Activated CD4-positive, alpha-beta T cell treated with anti-CD3 and anti-CD28 coated beads, Interleukin-2, amount 10 ng/mL, durations not matched to agents 24 days and 14 days (primary cell): ENCODE measurements at regions of chr9 and their contacts with region 1.

Region 1: GRCh38 chr9:3746296-3747275 is 220.8 kb upstream of the RFX3 start:
- DNase-seq: no peak
- H3K4me3 Mint-ChIP-seq: no peak overlapping the region
- H3K27ac Mint-ChIP-seq: peak overlapping the region; percentile 54
- H3K4me1 Mint-ChIP-seq: peaks cover 15% of the 10 kb centered on the region
- H3K27me3 Mint-ChIP-seq: no peaks in the 10 kb centered on the region

Region 2: DNA sequence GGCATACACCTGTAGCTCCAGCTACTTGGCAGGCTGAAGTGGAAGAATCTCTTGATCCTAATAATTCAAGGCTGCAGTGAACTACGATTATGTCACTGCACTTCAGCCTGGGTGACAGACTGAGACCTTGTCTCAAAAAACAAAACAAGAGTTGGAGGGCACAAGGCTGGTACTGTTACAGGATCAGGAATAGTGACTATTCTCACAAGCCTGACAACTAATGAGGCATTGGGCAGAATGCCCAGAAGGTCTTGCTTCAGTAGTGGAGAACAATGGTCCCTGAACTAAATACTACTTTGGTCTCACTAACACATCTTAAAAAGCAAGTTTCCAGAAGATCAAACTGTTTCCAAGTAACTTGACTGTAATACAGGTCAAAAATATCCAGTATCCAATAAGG is 37.8 kb before region 1 on chr9:
- intact Hi-C with region 1: no loop called
- DNase-seq: no peak
- H3K4me3 Mint-ChIP-seq: no peak overlapping the region
- H3K27ac Mint-ChIP-seq: no peak overlapping the region
- H3K4me1 Mint-ChIP-seq: no peaks in the 10 kb centered on the region
- H3K27me3 Mint-ChIP-seq: peaks cover 1% of the 10 kb centered on the region

Region 3: DNA sequence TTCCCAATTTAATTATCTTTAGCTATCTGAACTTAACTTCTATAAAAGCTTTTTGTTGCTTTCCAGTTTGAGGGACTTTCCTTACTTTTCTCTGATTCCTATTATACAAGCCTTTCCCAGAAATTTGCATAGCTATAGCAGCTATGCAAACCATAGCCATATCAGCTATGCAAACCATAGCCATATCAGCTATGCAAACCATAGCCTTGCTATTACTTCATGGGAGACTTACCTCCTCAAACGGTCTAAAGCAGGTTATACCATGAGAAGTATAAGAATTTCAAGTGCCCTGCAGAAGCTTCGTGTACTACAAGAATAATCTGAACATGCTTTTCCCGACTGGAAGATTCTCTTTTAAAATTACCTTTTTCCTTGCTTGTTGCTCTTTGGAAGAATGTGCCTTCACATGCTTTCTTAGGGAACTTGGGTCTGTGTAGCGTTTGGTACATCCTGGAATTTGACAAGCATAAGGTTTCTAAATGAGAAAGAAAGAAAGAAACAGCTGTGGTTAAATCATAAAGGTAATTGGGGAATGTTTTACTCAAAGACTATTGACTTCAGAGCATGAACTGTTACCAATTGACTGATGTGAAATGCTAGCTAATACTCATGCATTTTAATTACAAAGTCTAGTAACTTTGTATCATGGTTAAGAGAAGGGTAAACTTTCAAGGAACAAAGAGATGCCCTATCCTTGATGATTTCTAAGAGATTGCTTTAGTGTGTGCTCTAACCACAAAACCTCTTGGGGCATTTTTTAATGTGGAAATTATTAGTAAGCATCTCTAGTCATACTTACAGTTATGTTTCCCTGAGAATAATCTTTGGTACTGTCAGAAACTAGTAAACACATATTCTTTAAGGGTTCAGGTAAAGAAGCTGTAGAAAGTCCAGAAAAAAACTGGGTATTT is 185.7 kb after region 1 on chr9:
- intact Hi-C with region 1: loop called (anchors 1 kb)
- DNase-seq: no peak
- H3K4me3 Mint-ChIP-seq: no peak overlapping the region
- H3K27ac Mint-ChIP-seq: no peak overlapping the region
- H3K4me1 Mint-ChIP-seq: peaks cover 3% of the 10 kb centered on the region
- H3K27me3 Mint-ChIP-seq: no peaks in the 10 kb centered on the region

Region 4: DNA sequence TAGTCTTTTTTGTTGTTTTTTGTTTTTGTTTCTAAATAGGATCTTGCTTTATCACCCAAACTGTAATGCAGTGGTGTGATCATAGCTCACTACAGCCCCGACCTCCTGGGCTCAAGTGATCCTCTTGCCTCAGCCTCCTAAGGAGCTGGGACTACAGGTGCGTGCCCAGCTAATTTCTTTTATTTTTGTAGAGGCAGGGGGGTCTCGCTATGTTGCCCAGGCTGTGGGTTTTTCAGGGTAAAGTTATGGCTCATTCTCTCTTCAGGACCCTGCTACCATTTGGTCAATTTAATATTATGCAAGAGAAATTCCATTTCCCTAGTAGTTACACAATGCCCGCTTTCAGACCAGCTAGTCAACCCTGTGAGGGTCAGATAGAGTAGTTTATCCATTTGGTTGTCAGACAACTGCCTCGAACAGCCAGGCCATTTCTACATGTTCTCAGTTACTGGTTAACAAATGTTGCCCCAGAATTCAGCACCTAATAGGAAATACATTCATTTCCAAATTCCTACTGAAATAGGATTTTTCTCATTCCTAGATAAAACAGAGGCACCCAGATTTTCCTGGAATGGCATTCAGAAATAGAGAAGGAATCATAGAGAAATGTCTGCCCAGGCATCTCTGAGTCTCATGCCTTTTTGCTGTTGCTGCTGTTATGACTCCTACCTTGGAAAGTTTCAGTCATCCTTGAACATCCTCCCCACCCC is 559.6 kb after region 1 on chr9:
- intact Hi-C with region 1: loop called (anchors 5 kb)
- DNase-seq: peak; percentile 67
- H3K4me3 Mint-ChIP-seq: peak overlapping the region; percentile 60
- H3K27ac Mint-ChIP-seq: peak overlapping the region; percentile 83
- H3K4me1 Mint-ChIP-seq: peaks cover 52% of the 10 kb centered on the region
- H3K27me3 Mint-ChIP-seq: peaks cover 16% of the 10 kb centered on the region